IMR-90 (cell line): ENCODE measurements at regions of chr7 and their contacts with region 1.

Region 1: GRCh38 chr7:6175645-6176044 is 96.8 kb downstream of the CYTH3 start:
- DNase-seq: peak; percentile 57
- ATAC-seq: peak; percentile 33
- H3K4me3 ChIP-seq: no peak overlapping the region
- H3K27ac ChIP-seq: no peak overlapping the region
- H3K4me1 ChIP-seq: peaks cover 11% of the 10 kb centered on the region
- H3K27me3 ChIP-seq: no peaks in the 10 kb centered on the region
- CTCF ChIP-seq: no peak
- POLR2A ChIP-seq: no peak
- RAD21 ChIP-seq: no peak

Region 2: GRCh38 chr7:5532520-5533335 is 642.9 kb before region 1 on chr7:
- CTCF ChIA-PET with region 1: no interaction called
- POLR2A ChIA-PET with region 1: no interaction called
- dilution Hi-C with region 1: no loop called
- in situ Hi-C with region 1: no loop called
- intact Hi-C with region 1: no loop called
- DNase-seq: no peak
- ATAC-seq: no peak
- H3K4me3 ChIP-seq: no peak overlapping the region
- H3K27ac ChIP-seq: no peak overlapping the region
- H3K4me1 ChIP-seq: peaks cover 12% of the 10 kb centered on the region
- H3K27me3 ChIP-seq: no peaks in the 10 kb centered on the region
- CTCF ChIP-seq: no peak
- POLR2A ChIP-seq: no peak
- RAD21 ChIP-seq: no peak

Region 3: DNA sequence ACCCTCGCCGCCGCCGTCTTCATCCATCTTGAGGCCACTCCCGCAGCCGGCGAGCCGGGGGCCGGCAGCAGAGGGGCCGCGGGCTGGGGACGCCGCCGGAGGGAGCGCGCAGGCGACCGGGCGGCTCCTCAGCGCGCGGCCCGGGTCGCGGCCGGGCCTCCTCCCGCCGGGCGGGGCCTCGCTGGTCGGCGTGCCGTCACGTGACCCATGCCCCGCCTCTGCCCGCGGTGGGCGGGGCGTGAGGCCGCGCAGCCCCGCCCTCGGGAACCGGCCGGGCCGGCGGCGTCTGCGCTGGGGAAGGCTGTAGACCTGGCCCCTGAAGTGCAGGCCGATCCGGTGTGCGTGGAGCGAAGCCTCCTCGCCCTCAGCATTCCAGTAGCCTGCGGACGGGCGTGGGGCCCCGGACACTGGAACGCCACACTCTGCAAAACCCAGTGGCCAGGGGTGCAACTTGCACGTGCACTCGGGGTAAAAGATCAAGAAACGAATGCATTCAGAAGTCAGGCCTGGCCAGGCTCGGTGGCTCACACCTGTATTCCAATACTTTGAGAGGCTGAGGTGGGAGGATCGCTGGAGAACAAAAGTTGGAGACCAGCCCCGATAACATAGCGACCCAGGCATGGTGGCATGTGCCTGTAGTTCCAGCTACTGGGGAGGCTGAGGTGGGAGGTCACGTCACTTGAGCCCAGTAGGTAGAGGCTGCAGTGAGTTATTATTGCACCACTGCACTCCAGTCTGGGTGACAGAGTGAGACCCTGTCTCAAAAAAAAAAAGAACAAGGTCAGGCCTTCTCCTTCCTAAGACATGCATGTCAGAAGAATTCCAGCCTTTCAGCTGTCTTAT is 97.1 kb after region 1 on chr7 and contains the start of gene CYTH3:
- CTCF ChIA-PET with region 1: no interaction called
- POLR2A ChIA-PET with region 1: no interaction called
- dilution Hi-C with region 1: no loop called
- in situ Hi-C with region 1: no loop called
- intact Hi-C with region 1: loop called (anchors 5 kb)
- DNase-seq: peak; percentile 71
- ATAC-seq: peak; percentile 96
- H3K4me3 ChIP-seq: peak within 1 kb of the TSS; percentile 95
- H3K27ac ChIP-seq: peak within 1 kb of the TSS; percentile 75
- H3K4me1 ChIP-seq: peaks cover 14% of the 10 kb centered on the region
- H3K27me3 ChIP-seq: no peaks in the 10 kb centered on the region
- CTCF ChIP-seq: no peak
- POLR2A ChIP-seq: no peak
- RAD21 ChIP-seq: 0 out of 2 replicates have a peak, but pooled peaks have one; percentile 11
- total RNA-seq, gene CYTH3: 14.2 TPM in 2 replicates

Region 4: GRCh38 chr7:6323967-6324701 is 148.5 kb after region 1 on chr7:
- CTCF ChIA-PET with region 1: no interaction called
- POLR2A ChIA-PET with region 1: no interaction called
- dilution Hi-C with region 1: no loop called
- in situ Hi-C with region 1: no loop called
- intact Hi-C with region 1: loop called (anchors 5 kb)
- DNase-seq: no peak
- ATAC-seq: no peak
- H3K4me3 ChIP-seq: no peak overlapping the region
- H3K27ac ChIP-seq: no peak overlapping the region
- H3K4me1 ChIP-seq: no peaks in the 10 kb centered on the region
- H3K27me3 ChIP-seq: no peaks in the 10 kb centered on the region
- CTCF ChIP-seq: no peak
- POLR2A ChIP-seq: no peak
- RAD21 ChIP-seq: no peak